GM12878 (cell line): ENCODE measurements at regions of chr6 and their contacts with region 1.

Region 1: DNA sequence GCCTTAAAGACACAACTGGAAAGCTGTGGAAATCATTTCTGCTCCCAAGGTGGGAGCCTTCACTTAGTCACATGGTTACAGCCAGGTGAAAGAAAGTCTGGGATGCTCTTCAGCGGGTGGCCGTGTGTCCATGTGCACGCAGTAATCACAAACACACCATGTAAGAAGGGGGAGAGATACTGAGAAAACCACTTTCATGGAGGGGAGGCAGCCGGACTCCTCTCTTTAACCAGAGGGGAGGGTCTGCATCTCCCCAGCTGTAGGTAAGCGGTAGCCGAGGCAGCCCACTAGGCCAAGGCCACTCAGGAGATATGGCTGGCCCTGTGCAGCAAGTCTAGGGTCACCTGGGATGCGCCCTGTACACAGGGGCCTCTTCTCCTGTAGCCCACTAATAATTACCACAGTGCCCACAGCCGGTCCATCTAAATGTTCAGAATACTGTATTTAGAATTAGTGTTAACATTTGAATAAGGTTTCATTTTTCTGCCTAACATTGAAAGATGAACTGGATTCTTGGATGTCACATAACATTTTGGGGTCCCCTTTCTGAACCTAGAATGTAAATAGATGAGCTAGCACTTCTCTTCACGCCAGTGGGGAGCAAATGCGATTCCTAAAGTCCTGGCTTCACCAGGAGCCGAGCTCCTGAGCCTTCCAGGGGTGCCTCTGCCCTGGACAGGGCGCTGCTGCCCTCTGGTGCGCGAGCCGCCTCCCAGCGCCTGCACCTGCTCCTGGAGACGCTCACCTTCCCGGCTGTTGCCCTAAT is 15.9 kb downstream of the GPR31 start:
- DNase-seq: no peak
- ATAC-seq: peak; percentile 96
- H3K4me3 ChIP-seq: no peak overlapping the region
- H3K27ac ChIP-seq: no peak overlapping the region
- H3K4me1 ChIP-seq: peaks cover 10% of the 10 kb centered on the region
- H3K27me3 ChIP-seq: no peaks in the 10 kb centered on the region
- CTCF ChIP-seq: peak; percentile 94 to 98 (median 96); a peak in 5 of 6 replicates
- EP300 ChIP-seq: no peak
- POLR2A ChIP-seq: no peak
- RAD21 ChIP-seq: peak; percentile 99

Region 2: GRCh38 chr6:166005944-166006899 is 1135.6 kb before region 1 on chr6:
- CTCF ChIA-PET with region 1: no interaction called
- POLR2A ChIA-PET with region 1: no interaction called
- RAD21 ChIA-PET with region 1: no interaction called
- SMC1A ChIA-PET with region 1: no interaction called
- in situ Hi-C with region 1: no loop called
- intact Hi-C with region 1: no loop called
- DNase-seq: no peak
- ATAC-seq: no peak
- H3K4me3 ChIP-seq: no peak overlapping the region
- H3K27ac ChIP-seq: no peak overlapping the region
- H3K4me1 ChIP-seq: no peaks in the 10 kb centered on the region
- H3K27me3 ChIP-seq: peaks cover 0 to 2% of the 10 kb centered on the region in 2 experiments; a peak in 2 of 4 replicates
- CTCF ChIP-seq: no peak
- EP300 ChIP-seq: no peak
- POLR2A ChIP-seq: no peak
- RAD21 ChIP-seq: no peak

Region 3: DNA sequence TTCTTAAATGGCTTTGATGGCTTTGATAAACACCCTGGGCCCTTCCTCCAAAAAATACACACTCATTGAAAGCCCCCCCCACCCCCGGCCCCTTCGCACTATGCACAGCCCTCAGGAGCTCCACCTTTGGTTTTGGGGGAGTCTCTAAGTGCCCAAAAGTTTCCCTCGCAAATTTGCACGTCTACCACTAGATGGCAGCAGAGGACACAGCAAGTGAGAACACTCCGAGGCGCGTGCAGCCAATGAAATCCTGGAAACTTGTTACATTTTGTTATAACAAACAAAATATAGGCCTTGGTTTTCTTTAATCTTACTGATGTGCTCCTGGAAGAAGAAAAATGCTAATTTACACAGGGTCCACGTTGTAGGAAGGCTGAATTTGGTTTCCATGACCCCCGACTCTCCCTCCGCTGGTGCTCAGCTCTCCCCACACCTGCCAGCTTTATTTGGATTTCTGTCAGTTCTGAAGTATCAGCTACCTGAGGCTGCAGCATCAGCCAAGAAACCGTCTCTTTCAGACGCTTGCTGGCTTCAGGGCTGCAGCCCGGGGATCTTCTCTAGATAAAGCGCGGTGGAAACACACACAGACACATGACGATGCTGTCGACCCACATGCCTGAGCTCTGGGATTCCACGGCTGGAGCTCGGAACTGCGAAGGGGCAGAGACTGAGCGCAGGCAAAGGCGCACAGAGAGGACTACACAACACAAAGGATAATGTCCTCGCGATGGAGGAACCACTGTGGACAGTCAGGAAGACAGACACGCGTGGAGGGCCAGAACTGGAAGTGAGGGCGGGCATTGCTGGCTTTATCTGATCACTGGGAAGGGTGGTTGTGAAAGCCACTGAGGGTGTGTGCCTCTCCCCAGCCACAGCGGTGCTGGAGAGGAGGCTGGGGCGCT is 366.4 kb before region 1 on chr6:
- CTCF ChIA-PET with region 1: interaction called, 54 read pairs
- POLR2A ChIA-PET with region 1: no interaction called
- RAD21 ChIA-PET with region 1: interaction called, 19 read pairs
- SMC1A ChIA-PET with region 1: interaction called, 12 read pairs
- in situ Hi-C with region 1: loop called (anchors 10 kb)
- intact Hi-C with region 1: loop called (anchors 2 kb)
- DNase-seq: no peak
- ATAC-seq: peak; percentile 94
- H3K4me3 ChIP-seq: no peak overlapping the region
- H3K27ac ChIP-seq: no peak overlapping the region
- H3K4me1 ChIP-seq: no peaks in the 10 kb centered on the region
- H3K27me3 ChIP-seq: peaks cover 0 to 2% of the 10 kb centered on the region in 2 experiments; a peak in 1 of 4 replicates
- CTCF ChIP-seq: peak; percentile 84 to 91 (median 88)
- EP300 ChIP-seq: no peak
- POLR2A ChIP-seq: no peak
- RAD21 ChIP-seq: peak; percentile 96

Region 4: GRCh38 chr6:166956444-166957086 is 185.3 kb before region 1 on chr6 and contains the start of gene RNASET2:
- CTCF ChIA-PET with region 1: interaction called, 18 read pairs
- POLR2A ChIA-PET with region 1: interaction called, 7 read pairs
- RAD21 ChIA-PET with region 1: interaction called, 10 read pairs
- SMC1A ChIA-PET with region 1: interaction called, 12 read pairs
- in situ Hi-C with region 1: no loop called
- intact Hi-C with region 1: loop called (anchors 2 kb)
- DNase-seq: no peak
- ATAC-seq: peak; percentile 83
- H3K4me3 ChIP-seq: peak within 1 kb of the TSS; percentile 94
- H3K27ac ChIP-seq: peak within 1 kb of the TSS; percentile 94
- H3K4me1 ChIP-seq: peaks cover 49% of the 10 kb centered on the region
- H3K27me3 ChIP-seq: no peaks in the 10 kb centered on the region
- CTCF ChIP-seq: no peak
- EP300 ChIP-seq: no peak
- POLR2A ChIP-seq: peak; percentile 91
- RAD21 ChIP-seq: no peak
- polyA plus RNA-seq, gene RNASET2: 5.5 to 17.8 TPM

Region 5: GRCh38 chr6:167020206-167020605 is 121.6 kb before region 1 on chr6:
- CTCF ChIA-PET with region 1: interaction called, 4 read pairs
- POLR2A ChIA-PET with region 1: no interaction called
- RAD21 ChIA-PET with region 1: no interaction called
- SMC1A ChIA-PET with region 1: interaction called, 7 read pairs
- in situ Hi-C with region 1: loop called (anchors 25 kb)
- intact Hi-C with region 1: no loop called
- DNase-seq: no peak
- ATAC-seq: peak; percentile 93
- H3K4me3 ChIP-seq: no peak overlapping the region
- H3K27ac ChIP-seq: no peak overlapping the region; the same call in 1 of the 2 replicates
- H3K4me1 ChIP-seq: peaks cover 8% of the 10 kb centered on the region; the same call in 1 of the 2 replicates
- H3K27me3 ChIP-seq: no peaks in the 10 kb centered on the region
- CTCF ChIP-seq: no peak
- EP300 ChIP-seq: no peak
- POLR2A ChIP-seq: no peak
- RAD21 ChIP-seq: no peak

Region 6: DNA sequence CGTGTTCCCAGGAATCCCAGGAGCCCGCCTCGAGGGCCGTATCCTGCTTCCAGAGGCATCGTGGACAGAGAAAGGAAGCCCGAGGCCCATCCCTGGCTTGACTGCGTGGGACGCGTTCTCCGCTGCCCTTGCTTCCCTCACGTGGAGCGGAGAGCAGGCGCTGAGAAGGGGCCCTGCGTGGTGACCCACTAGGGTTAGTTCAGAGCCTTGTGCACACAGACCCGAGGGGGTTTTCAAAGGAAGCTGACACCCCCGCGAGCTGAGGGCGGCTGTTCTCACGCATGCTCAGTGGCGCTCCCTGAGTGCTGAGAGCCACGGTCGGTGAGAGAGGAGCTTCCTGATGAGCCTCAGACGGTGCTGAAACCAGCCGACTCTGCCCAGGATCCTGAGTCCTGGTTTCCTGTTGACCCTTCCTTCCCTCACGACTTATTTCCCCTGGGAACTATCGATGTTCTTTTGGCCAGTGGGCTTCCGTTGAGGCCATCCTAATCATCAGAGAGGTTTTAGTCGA is 47.9 kb before region 1 on chr6:
- CTCF ChIA-PET with region 1: interaction called, 16 read pairs
- POLR2A ChIA-PET with region 1: interaction called, 5 read pairs
- RAD21 ChIA-PET with region 1: interaction called, 56 read pairs
- SMC1A ChIA-PET with region 1: interaction called, 81 read pairs
- in situ Hi-C with region 1: no loop called
- intact Hi-C with region 1: no loop called
- DNase-seq: peak; percentile 90
- ATAC-seq: peak; percentile 66
- H3K4me3 ChIP-seq: peak overlapping the region; percentile 70
- H3K27ac ChIP-seq: peak overlapping the region; percentile 99
- H3K4me1 ChIP-seq: peaks cover 74% of the 10 kb centered on the region
- H3K27me3 ChIP-seq: no peaks in the 10 kb centered on the region
- CTCF ChIP-seq: no peak
- EP300 ChIP-seq: peak; percentile 39 to 66; a peak in 2 of 4 replicates
- POLR2A ChIP-seq: peak; percentile 88
- RAD21 ChIP-seq: no peak

Region 7: GRCh38 chr6:167130008-167130677 is 11.7 kb before region 1 on chr6:
- CTCF ChIA-PET with region 1: interaction called, 60 read pairs
- POLR2A ChIA-PET with region 1: interaction called, 10 read pairs
- RAD21 ChIA-PET with region 1: interaction called, 120 read pairs
- SMC1A ChIA-PET with region 1: interaction called, 351 read pairs
- in situ Hi-C with region 1: no loop called
- intact Hi-C with region 1: no loop called
- DNase-seq: no peak
- ATAC-seq: peak; percentile 71
- H3K4me3 ChIP-seq: peak overlapping the region; percentile 1; the same call in 1 of the 2 replicates
- H3K27ac ChIP-seq: peak overlapping the region; percentile 47
- H3K4me1 ChIP-seq: peaks cover 21% of the 10 kb centered on the region
- H3K27me3 ChIP-seq: no peaks in the 10 kb centered on the region
- CTCF ChIP-seq: no peak
- EP300 ChIP-seq: no peak
- POLR2A ChIP-seq: no peak
- RAD21 ChIP-seq: no peak